Sigmoid colon (tissue), 7 donors: ENCODE measurements at regions of chr19 and their contacts with region 1.

Region 1: DNA sequence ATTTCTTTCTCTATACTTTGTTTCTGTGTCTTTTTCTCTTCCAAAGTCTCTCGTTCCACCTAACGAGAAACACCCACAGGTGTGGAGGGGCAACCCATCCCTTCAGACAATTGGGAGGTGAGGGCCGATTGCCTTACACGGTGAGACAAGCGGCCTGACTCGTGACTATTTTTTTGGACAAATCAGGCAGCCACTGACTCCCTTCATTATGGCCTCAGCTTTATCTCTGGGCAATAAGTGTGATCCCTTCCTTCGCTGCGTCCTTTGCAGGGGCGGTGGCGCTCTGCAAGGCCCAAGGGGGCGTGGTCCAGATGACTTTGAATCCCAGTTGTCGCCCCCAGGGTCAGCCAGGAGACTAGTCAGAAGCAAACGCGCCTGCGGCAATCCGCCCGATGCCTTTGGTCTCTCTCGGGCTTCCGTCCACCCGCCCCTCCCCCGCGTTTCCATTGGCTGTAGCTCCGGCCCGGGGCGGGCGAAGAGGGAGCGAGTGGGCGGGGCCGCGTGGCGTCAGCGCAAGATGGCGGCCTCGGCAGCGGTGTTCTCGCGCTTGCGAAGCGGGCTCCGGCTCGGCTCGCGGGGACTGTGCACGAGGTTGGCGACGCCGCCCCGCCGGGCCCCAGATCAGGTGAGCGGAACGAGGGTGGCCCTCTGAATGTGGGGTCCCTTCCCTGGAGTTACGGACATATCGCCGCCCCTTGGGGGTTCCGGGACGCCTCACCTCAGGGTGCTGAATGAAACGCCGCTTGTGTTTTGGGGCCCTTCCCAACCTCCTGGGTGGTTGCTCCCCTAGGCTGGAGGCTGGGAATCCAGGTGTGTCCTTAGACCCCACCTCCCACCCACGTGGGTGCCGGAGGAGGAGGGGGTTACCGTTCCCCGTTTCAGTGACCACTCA is at the start of gene TIMM50:
- DNase-seq: peak; percentile 97
- H3K4me3 ChIP-seq: peak within 1 kb of the TSS; percentile 81 to 96 (median 93)
- H3K27ac ChIP-seq: peak within 1 kb of the TSS; percentile 81 to 86 (median 84)
- H3K4me1 ChIP-seq: peaks cover 0 to 21% (median 19%) of the 10 kb centered on the region in 4 donors
- H3K27me3 ChIP-seq: no peaks in the 10 kb centered on the region
- CTCF ChIP-seq: no peak
- EP300 ChIP-seq: no peak
- POLR2A ChIP-seq: peak; percentile 41 to 43
- total RNA-seq, gene TIMM50: 42.1 to 54.4 (median 46.8) TPM

Region 2: GRCh38 chr19:39390755-39391592 is 89.6 kb before region 1 on chr19 and contains the starts of genes MED29 and PAF1:
- intact Hi-C with region 1: loop called (anchors 5 kb)
- DNase-seq: peak; percentile 99
- H3K4me3 ChIP-seq: peak within 1 kb of the TSS; percentile 71 to 98 (median 98)
- H3K27ac ChIP-seq: peak within 1 kb of the TSS; percentile 99 to 100 (median 100)
- H3K4me1 ChIP-seq: peaks cover 0 to 26% (median 26%) of the 10 kb centered on the region in 4 donors
- H3K27me3 ChIP-seq: no peaks in the 10 kb centered on the region
- CTCF ChIP-seq: no peak
- EP300 ChIP-seq: peak in 1 of 4 donors; percentile 2
- POLR2A ChIP-seq: peak; percentile 88 to 89
- total RNA-seq, gene MED29: 25.2 to 44.6 (median 33.7) TPM
- total RNA-seq, gene PAF1: 37.5 to 51.8 (median 43.5) TPM

Region 3: GRCh38 chr19:39445265-39446111 is 35.1 kb before region 1 on chr19 and contains the start of gene SUPT5H:
- intact Hi-C with region 1: loop called (anchors 2 kb)
- DNase-seq: peak; percentile 99
- H3K4me3 ChIP-seq: peak within 1 kb of the TSS; percentile 60 to 96 (median 95)
- H3K27ac ChIP-seq: peak within 1 kb of the TSS; percentile 91 to 95 (median 94)
- H3K4me1 ChIP-seq: peaks cover 0 to 41% (median 37%) of the 10 kb centered on the region in 4 donors
- H3K27me3 ChIP-seq: no peaks in the 10 kb centered on the region
- CTCF ChIP-seq: no peak
- EP300 ChIP-seq: peak in 2 of 4 donors; percentile 14 to 17
- POLR2A ChIP-seq: peak; percentile 95 to 96
- total RNA-seq, gene SUPT5H: 72.1 to 104 (median 89.1) TPM

Region 4: GRCh38 chr19:39532233-39533002 is 51.8 kb after region 1 on chr19 and contains the start of gene EID2B:
- intact Hi-C with region 1: loop called (anchors 2 kb)
- DNase-seq: peak; percentile 98
- H3K4me3 ChIP-seq: peak within 1 kb of the TSS; percentile 70 to 89 (median 78)
- H3K27ac ChIP-seq: peak within 1 kb of the TSS; percentile 86 to 94 (median 92)
- H3K4me1 ChIP-seq: peaks cover 0 to 26% (median 13%) of the 10 kb centered on the region in 4 donors
- H3K27me3 ChIP-seq: no peaks in the 10 kb centered on the region
- CTCF ChIP-seq: peak; percentile 94 to 99 (median 98)
- EP300 ChIP-seq: no peak
- POLR2A ChIP-seq: peak; percentile 44 to 74
- total RNA-seq, gene EID2B: 3.9 to 7.7 (median 5.3) TPM